Activated T-helper 1 cell treated with anti-CD3 and anti-CD28 coated beads, Interleukin-12 subunit alpha, Interleukin-12 subunit beta, Interleukin-2, Interleukin-4 antibody, amounts not matched to agents 30 ng/mL and 10 ng/mL and 1 ng/mL, durations not matched to agents 14 hours and 24 hours and 36 hours (primary cell): ENCODE measurements at regions of chr6 and their contacts with region 1.

Region 1: DNA sequence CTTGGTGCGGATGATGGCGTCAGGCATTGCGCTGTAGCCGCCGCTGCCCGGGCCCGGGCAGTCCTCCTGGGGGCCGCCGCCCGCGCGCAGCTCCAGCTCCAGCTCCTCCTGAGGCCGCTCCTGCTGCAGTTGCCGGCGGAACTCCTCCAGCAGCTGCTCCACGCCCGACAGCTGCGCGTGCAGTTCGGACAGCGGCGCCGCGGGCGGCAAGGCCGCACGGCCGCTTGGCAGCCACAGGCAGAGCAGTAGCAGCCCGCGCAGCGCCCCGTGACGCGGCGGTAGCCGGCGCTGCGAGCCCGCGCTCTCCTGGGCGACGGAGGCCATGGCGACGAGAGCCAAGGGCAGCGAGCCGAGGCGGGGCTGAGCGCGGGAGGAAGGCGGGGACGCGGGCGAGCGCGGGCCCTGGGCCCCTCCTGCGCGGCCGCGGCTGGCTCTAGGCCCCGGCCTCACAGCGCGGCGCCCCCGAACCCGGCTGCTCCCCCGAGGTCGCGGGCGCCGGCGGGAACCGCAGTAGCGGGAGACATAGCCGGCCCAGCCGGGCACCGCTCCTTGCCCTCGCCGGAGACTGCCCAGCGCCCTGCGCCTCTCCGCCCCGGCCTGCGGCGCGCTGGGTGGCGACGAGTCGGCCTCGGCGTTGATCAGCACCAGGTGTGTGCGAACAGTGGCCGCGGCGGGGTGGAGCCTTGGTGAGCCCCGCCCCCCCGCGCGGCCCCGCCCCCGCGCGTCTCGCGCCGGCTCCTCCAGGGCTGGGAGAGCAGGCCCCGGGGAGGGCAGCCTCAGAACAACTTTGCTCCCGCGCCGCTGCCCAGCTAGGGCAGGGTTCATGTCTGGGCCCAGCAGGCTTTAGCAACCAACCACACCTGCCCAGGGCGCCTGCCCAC is at the start of gene LRP11:
- DNase-seq: peak; percentile 80
- H3K4me3 Mint-ChIP-seq: peak within 1 kb of the TSS; percentile 80
- H3K27ac Mint-ChIP-seq: no peak within 1 kb of the TSS
- H3K4me1 Mint-ChIP-seq: peaks cover 35% of the 10 kb centered on the region
- H3K27me3 Mint-ChIP-seq: peaks cover 23% of the 10 kb centered on the region
- total RNA-seq, gene LRP11: 3.5 and 5.1 TPM in 2 replicates

Region 2: GRCh38 chr6:149565527-149566409 is 298.2 kb before region 1 on chr6 and contains the start of gene GINM1:
- intact Hi-C with region 1: loop called (anchors 1 kb)
- DNase-seq: peak; percentile 97
- H3K4me3 Mint-ChIP-seq: peak within 1 kb of the TSS; percentile 92
- H3K27ac Mint-ChIP-seq: peak within 1 kb of the TSS; percentile 94
- H3K4me1 Mint-ChIP-seq: peaks cover 17% of the 10 kb centered on the region
- H3K27me3 Mint-ChIP-seq: peaks cover 7% of the 10 kb centered on the region
- total RNA-seq, gene GINM1: 15.4 and 18.6 TPM in 2 replicates

Region 3: DNA sequence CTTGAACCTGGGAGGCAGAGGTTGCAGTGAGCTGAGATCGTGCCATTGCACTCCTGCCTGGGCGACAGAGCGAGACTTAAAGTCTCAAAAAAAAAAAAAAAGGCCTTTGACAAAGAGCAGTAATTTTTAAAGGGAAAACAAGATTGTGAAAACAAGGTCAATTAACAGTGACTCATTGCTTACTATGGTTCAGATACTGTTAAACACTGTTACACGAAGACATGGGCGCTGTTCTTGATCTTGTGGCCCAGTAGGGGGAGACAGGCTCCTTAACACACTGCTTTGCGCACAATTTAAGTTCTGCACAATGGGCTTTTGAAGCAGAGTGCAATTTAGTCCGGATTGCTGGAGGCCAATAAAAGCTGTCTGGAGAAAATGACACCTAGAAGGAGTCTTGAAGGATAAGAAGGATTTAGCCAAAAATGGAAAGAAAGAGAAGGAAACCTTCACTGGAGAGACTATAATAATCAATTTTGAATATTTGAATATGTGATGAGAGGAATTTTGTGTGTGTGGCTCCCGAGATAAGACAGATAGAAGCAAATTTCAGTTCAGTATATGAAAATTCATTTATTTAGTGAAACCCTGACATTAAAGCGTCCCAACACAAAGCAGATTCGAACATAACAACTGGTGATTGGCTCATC is 140.0 kb before region 1 on chr6:
- intact Hi-C with region 1: loop called (anchors 2 kb)
- DNase-seq: peak; percentile 17
- H3K4me3 Mint-ChIP-seq: no peak overlapping the region
- H3K27ac Mint-ChIP-seq: no peak overlapping the region
- H3K4me1 Mint-ChIP-seq: peaks cover 23% of the 10 kb centered on the region
- H3K27me3 Mint-ChIP-seq: no peaks in the 10 kb centered on the region

Region 4: GRCh38 chr6:149834513-149835481 is 29.1 kb before region 1 on chr6:
- intact Hi-C with region 1: loop called (anchors 1 kb)
- DNase-seq: peak; percentile 60
- H3K4me3 Mint-ChIP-seq: no peak overlapping the region
- H3K27ac Mint-ChIP-seq: no peak overlapping the region
- H3K4me1 Mint-ChIP-seq: peaks cover 5% of the 10 kb centered on the region
- H3K27me3 Mint-ChIP-seq: peaks cover 3% of the 10 kb centered on the region

Region 5: DNA sequence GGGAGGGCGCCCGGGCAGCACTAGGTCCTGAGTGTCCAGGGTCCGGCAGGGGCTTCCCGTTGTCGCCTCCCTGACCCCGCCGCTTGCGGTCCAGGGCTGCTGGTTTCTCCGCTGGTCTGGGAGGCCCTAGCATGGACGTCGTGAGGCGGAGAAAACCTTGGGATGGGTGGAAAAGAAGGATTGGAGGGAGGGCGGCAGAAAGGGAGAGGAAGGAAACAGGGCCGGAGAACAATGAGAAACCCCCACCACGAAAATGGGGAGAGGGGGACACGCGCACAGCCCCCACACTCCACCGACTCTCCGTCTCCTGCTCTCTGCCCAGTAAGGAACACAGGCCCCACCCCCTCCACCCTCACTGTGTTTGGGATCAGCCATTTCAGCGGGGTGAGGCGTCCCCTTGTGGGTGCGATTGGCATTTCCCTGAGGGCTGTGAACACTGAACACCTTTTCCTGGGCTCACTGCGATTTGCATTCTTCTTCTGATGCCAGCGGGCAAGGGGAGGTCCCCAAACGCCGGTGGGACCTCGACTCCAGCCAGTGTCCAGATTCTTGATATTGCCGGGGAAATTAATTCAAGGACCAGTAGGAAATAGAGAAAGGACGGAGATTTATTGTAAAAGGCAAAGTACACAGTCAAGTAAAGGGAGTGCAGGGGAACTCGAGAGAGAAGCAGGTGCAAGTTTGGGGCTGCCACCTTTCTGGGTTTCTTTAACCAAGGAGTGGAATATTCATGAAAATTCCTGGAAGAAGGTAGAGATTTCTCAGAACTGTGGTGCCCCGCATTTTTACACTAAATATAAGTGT is 62.2 kb after region 1 on chr6:
- intact Hi-C with region 1: loop called (anchors 1 kb)
- DNase-seq: peak; percentile 69
- H3K4me3 Mint-ChIP-seq: peak overlapping the region; percentile 28
- H3K27ac Mint-ChIP-seq: no peak overlapping the region
- H3K4me1 Mint-ChIP-seq: peaks cover 15% of the 10 kb centered on the region
- H3K27me3 Mint-ChIP-seq: peaks cover 87% of the 10 kb centered on the region

Region 6: DNA sequence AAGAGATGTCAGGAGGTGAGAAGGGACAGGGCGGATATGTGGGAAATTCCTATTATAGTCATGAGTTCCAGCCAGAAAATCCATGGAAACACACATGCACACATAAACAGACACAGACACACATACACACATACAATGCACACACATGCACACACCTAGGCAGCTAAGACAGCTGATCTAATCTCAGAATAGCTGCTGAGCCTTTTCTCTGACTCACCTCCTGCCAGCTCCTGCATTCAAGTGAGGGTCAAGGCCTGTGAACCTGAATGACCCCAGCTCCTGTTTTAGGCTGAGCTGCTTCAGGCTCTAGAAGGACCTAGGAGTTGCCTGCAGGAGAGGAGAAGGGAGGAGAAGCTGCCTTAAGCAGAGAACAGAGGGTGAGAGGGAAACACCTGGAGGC is 183.0 kb after region 1 on chr6:
- intact Hi-C with region 1: no loop called
- DNase-seq: no peak
- H3K4me3 Mint-ChIP-seq: no peak overlapping the region
- H3K27ac Mint-ChIP-seq: no peak overlapping the region
- H3K4me1 Mint-ChIP-seq: no peaks in the 10 kb centered on the region
- H3K27me3 Mint-ChIP-seq: peaks cover 24% of the 10 kb centered on the region